PC-9 (cell line): ENCODE measurements at regions of chr14 and their contacts with region 1.

Region 1: DNA sequence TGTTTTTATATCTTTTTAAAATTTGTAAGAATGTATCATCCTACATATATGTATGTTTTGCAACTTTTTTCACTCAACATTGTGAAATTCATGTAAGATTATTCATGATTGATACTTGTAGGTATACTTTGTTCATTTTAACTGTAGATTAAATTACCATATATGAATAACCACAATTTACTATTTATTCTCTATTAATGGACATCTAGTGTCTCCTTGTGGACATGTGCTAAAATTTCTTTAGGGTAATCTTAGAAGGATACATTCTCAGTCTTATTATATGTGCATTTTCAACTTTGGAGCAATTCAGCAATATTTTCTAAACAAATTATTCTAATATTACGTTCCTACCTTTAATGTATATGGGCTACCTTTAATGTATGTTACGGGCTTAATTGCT is 192.4 kb downstream of the FUT8 start:
- DNase-seq: no peak
- H3K4me3 ChIP-seq: no peak overlapping the region
- H3K27ac ChIP-seq: no peak overlapping the region
- H3K4me1 ChIP-seq: no peaks in the 10 kb centered on the region
- H3K27me3 ChIP-seq: no peaks in the 10 kb centered on the region
- CTCF ChIP-seq: 0 out of 2 replicates have a peak, but pooled peaks have one; percentile 26

Region 2: GRCh38 chr14:65421201-65421981 is 183.5 kb before region 1 on chr14:
- CTCF ChIA-PET with region 1: no interaction called
- POLR2A ChIA-PET with region 1: no interaction called
- intact Hi-C with region 1: loop called (anchors 5 kb)
- DNase-seq: peak in 1 of 2 experiments; percentile 62
- H3K4me3 ChIP-seq: no peak overlapping the region
- H3K27ac ChIP-seq: peak overlapping the region; percentile 22; the same call in 1 of the 2 replicates
- H3K4me1 ChIP-seq: peaks cover 44% of the 10 kb centered on the region
- H3K27me3 ChIP-seq: no peaks in the 10 kb centered on the region
- CTCF ChIP-seq: no peak